CD4-positive, alpha-beta memory T cell (primary cell): ENCODE measurements at regions of chr6 and their contacts with region 1.

Region 1: DNA sequence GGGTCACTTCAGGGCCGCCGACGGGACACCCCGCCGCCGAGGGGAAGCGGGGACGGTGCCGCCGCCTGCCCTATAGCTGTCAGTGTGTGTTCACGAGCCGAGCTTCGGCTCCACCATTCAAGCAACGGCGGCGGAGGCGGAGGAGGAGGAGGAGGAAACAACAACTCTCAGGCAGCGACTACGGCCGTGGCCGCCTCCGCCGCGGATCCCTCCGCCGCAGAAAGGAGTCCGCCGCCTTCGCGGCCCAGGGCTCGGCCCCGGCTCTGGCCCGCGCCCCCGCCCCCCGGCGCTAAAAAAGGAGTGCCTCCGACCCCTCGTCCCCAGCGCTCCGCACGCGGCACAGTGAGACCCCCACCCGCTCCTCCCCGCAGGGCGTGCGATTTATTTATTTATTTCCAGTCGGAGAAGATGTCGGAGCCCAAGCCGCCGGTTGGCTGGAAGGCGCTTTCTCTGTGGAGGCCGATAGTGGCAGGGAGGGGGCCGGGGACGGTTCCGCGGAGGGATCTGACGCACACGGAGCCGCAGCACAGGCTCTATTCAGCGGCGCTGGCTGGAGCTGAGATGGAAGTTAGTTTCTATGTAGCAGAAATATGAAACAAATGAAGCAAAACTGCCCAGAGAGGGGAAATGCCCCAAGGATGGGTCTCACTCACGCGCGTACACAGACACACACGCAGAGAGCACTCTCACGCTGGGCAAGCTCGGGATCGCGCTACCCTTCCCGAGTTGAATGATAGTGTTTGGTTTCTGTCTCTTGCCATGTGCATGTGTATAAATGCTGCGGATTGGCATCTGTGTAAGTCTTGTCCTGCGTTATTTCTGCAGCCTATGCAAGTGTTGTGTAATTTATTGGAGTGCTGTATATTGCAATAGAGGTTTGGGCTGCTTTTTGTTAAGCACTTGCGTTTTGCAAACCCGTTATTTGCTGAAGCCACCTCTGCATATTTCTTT is at the start of gene PHIP:
- DNase-seq: peak; percentile 95 to 97 (median 97)
- H3K4me3 ChIP-seq: peak within 1 kb of the TSS; percentile 86 to 89
- H3K4me3 Mint-ChIP-seq: peak within 1 kb of the TSS; percentile 90 to 98 (median 96)
- H3K27ac ChIP-seq: peak within 1 kb of the TSS; percentile 80
- H3K27ac Mint-ChIP-seq: peak within 1 kb of the TSS; percentile 94 to 99 (median 95)
- H3K4me1 ChIP-seq: peaks cover 39% of the 10 kb centered on the region
- H3K4me1 Mint-ChIP-seq: peaks cover 25 to 58% (median 33%) of the 10 kb centered on the region in 4 donors
- H3K27me3 ChIP-seq: no peaks in the 10 kb centered on the region
- H3K27me3 Mint-ChIP-seq: peaks cover 4 to 9% of the 10 kb centered on the region in 2 donors
- total RNA-seq, gene PHIP: 45.2 to 46.8 TPM

Region 2: GRCh38 chr6:78867370-78868040 is 210.8 kb before region 1 on chr6 and contains the start of gene IRAK1BP1:
- CTCF ChIA-PET with region 1: no interaction called
- POLR2A ChIA-PET with region 1: interaction called, 13 read pairs
- intact Hi-C with region 1: loop called (anchors 1 kb)
- DNase-seq: peak; percentile 71 to 79 (median 78)
- H3K4me3 ChIP-seq: peak within 1 kb of the TSS; percentile 84 to 99
- H3K4me3 Mint-ChIP-seq: peak within 1 kb of the TSS; percentile 94 to 99 (median 98)
- H3K27ac ChIP-seq: peak within 1 kb of the TSS; percentile 47
- H3K27ac Mint-ChIP-seq: peak within 1 kb of the TSS; percentile 78 to 98 (median 96)
- H3K4me1 ChIP-seq: peaks cover 13% of the 10 kb centered on the region
- H3K4me1 Mint-ChIP-seq: peaks cover 2 to 30% (median 17%) of the 10 kb centered on the region in 4 donors
- H3K27me3 ChIP-seq: no peaks in the 10 kb centered on the region
- H3K27me3 Mint-ChIP-seq: no peaks in the 10 kb centered on the region
- total RNA-seq, gene IRAK1BP1: 3.1 to 3.2 TPM

Region 3: GRCh38 chr6:79048611-79049010 is 29.7 kb before region 1 on chr6:
- CTCF ChIA-PET with region 1: interaction called, 6 read pairs
- POLR2A ChIA-PET with region 1: interaction called, 30 read pairs
- intact Hi-C with region 1: loop called (anchors 5 kb)
- DNase-seq: peak in 3 of 5 donors; percentile 3 to 16 (median 11)
- H3K4me3 ChIP-seq: no peak overlapping the region
- H3K4me3 Mint-ChIP-seq: no peak overlapping the region
- H3K27ac ChIP-seq: no peak overlapping the region
- H3K27ac Mint-ChIP-seq: peak overlapping the region in 1 of 7 donors; percentile 10
- H3K4me1 ChIP-seq: peaks cover 28% of the 10 kb centered on the region
- H3K4me1 Mint-ChIP-seq: peaks cover 28 to 48% (median 43%) of the 10 kb centered on the region in 4 donors
- H3K27me3 ChIP-seq: no peaks in the 10 kb centered on the region
- H3K27me3 Mint-ChIP-seq: no peaks in the 10 kb centered on the region

Region 4: GRCh38 chr6:79101164-79101563 is 22.8 kb after region 1 on chr6:
- CTCF ChIA-PET with region 1: no interaction called
- POLR2A ChIA-PET with region 1: no interaction called
- intact Hi-C with region 1: no loop called
- DNase-seq: no peak
- H3K4me3 ChIP-seq: no peak overlapping the region
- H3K4me3 Mint-ChIP-seq: no peak overlapping the region
- H3K27ac ChIP-seq: no peak overlapping the region
- H3K27ac Mint-ChIP-seq: no peak overlapping the region
- H3K4me1 ChIP-seq: no peaks in the 10 kb centered on the region
- H3K4me1 Mint-ChIP-seq: no peaks in the 10 kb centered on the region
- H3K27me3 ChIP-seq: no peaks in the 10 kb centered on the region
- H3K27me3 Mint-ChIP-seq: peaks cover 17 to 32% of the 10 kb centered on the region in 2 donors

Region 5: GRCh38 chr6:79233611-79234149 is 155.3 kb after region 1 on chr6:
- CTCF ChIA-PET with region 1: interaction called, 4 read pairs
- POLR2A ChIA-PET with region 1: interaction called, 26 read pairs
- intact Hi-C with region 1: loop called (anchors 1 kb)
- DNase-seq: peak; percentile 58 to 71 (median 64)
- H3K4me3 ChIP-seq: peak overlapping the region; percentile 77 to 99
- H3K4me3 Mint-ChIP-seq: peak overlapping the region; percentile 92 to 99 (median 98)
- H3K27ac ChIP-seq: peak overlapping the region; percentile 72
- H3K27ac Mint-ChIP-seq: peak overlapping the region; percentile 85 to 96 (median 92)
- H3K4me1 ChIP-seq: peaks cover 20% of the 10 kb centered on the region
- H3K4me1 Mint-ChIP-seq: peaks cover 14 to 30% (median 16%) of the 10 kb centered on the region in 4 donors
- H3K27me3 ChIP-seq: no peaks in the 10 kb centered on the region
- H3K27me3 Mint-ChIP-seq: no peaks in the 10 kb centered on the region

Region 6: DNA sequence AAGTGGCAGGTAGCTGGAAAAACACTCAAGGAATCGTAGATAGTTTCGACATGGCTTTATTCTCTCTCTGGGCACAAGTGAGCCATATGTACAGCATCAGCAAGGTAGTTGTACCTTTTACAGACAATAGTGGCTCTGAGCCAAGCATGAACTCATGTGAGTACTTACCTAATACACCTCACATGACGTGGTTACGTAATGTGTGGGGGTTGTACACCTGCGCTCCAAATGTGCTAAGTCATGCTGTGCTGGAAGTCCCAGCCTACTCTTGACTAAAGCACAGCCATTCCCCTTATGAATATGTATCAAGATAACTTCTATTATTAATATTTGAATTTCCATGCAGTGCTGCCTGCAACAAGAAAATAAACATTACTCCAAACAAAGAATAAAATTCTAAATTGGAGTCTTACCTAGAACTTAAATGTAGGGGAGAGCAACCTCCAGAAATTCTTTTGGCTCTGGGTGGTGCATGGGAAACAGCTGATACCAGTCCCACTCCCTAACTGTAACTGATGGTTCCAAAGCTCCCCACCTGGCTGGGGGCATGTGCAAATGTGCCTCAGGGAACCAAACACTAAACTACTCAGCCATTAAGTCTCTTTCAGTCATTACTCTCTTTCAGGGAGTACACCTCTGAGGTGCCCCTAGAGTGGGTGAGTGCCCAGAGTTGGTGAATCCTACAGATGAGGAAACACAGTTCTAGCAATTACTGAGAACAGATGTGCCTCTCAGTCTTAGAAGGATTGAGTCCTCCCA is 235.1 kb after region 1 on chr6:
- CTCF ChIA-PET with region 1: no interaction called
- POLR2A ChIA-PET with region 1: no interaction called
- intact Hi-C with region 1: no loop called
- DNase-seq: no peak
- H3K4me3 ChIP-seq: no peak overlapping the region
- H3K4me3 Mint-ChIP-seq: no peak overlapping the region
- H3K27ac ChIP-seq: no peak overlapping the region
- H3K27ac Mint-ChIP-seq: no peak overlapping the region
- H3K4me1 ChIP-seq: no peaks in the 10 kb centered on the region
- H3K4me1 Mint-ChIP-seq: no peaks in the 10 kb centered on the region
- H3K27me3 ChIP-seq: no peaks in the 10 kb centered on the region
- H3K27me3 Mint-ChIP-seq: no peaks in the 10 kb centered on the region

Region 7: GRCh38 chr6:79672631-79673111 is 594.3 kb after region 1 on chr6:
- CTCF ChIA-PET with region 1: no interaction called
- POLR2A ChIA-PET with region 1: no interaction called
- intact Hi-C with region 1: loop called (anchors 5 kb)
- DNase-seq: no peak
- H3K4me3 ChIP-seq: no peak overlapping the region
- H3K4me3 Mint-ChIP-seq: no peak overlapping the region
- H3K27ac ChIP-seq: no peak overlapping the region
- H3K27ac Mint-ChIP-seq: peak overlapping the region in 2 of 7 donors; percentile 6 to 11
- H3K4me1 ChIP-seq: peaks cover 25% of the 10 kb centered on the region
- H3K4me1 Mint-ChIP-seq: peaks cover 12 to 27% (median 18%) of the 10 kb centered on the region in 4 donors
- H3K27me3 ChIP-seq: no peaks in the 10 kb centered on the region
- H3K27me3 Mint-ChIP-seq: no peaks in the 10 kb centered on the region

Region 8: DNA sequence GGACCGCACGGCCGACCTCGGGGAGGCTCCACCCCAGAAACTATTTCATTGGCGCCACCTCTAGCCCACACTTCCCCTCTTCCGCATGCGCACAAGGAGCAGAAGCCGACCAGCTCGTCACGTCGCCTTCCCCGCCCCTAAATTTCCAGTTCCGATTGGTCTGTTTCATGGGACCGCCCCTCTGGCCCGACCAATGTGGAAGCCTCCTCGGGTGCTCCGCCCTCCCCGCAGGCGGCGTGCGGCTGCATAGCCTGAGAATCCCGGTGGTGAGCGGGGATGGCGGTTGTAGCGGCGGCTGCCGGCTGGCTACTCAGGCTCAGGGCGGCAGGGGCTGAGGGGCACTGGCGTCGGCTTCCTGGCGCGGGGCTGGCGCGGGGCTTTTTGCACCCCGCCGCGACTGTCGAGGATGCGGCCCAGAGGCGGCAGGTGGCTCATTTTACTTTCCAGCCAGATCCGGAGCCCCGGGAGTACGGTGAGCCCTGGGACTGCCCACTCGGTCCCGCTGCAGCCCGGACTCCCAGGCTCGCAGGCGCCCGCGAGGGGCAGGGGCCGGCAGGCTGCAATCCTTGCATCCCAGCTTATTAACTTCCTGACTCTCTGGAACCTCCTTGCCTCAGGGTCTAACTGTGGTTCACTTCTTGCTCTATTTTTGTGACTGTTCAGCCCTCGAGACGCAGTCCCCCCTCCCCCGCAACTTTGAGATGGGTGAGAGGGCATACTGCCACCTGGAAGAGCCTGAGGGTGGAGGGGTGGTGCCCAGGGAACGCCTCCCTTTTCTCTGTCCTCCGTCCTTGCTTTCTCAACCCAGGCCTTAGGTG is 1028.3 kb after region 1 on chr6 and contains the start of gene BCKDHB:
- CTCF ChIA-PET with region 1: no interaction called
- POLR2A ChIA-PET with region 1: interaction called, 10 read pairs
- intact Hi-C with region 1: loop called (anchors 2 kb)
- DNase-seq: peak; percentile 98 to 99 (median 98)
- H3K4me3 ChIP-seq: peak within 1 kb of the TSS; percentile 52 to 54
- H3K4me3 Mint-ChIP-seq: peak within 1 kb of the TSS; percentile 87 to 95 (median 92)
- H3K27ac ChIP-seq: peak within 1 kb of the TSS; percentile 50
- H3K27ac Mint-ChIP-seq: peak within 1 kb of the TSS; percentile 76 to 95 (median 92)
- H3K4me1 ChIP-seq: peaks cover 16% of the 10 kb centered on the region
- H3K4me1 Mint-ChIP-seq: peaks cover 12 to 22% (median 18%) of the 10 kb centered on the region in 4 donors
- H3K27me3 ChIP-seq: no peaks in the 10 kb centered on the region
- H3K27me3 Mint-ChIP-seq: peaks cover 1 to 3% of the 10 kb centered on the region in 2 donors
- total RNA-seq, gene BCKDHB: 11.8 to 16.0 TPM